ENCODE measurements at regions of chr14 and their contacts with region 1.

Region 1: GRCh38 chr14:103808403-103809001 is 38.9 kb downstream of the PPP1R13B start:
- DNase-seq: peak; percentile 66 to 82
- ATAC-seq: peak; percentile 76 to 89 (median 85)
- H3K4me3 ChIP-seq: no peak overlapping the region
- H3K27ac ChIP-seq: peak overlapping the region in 3 of 10 donors; percentile 5 to 42 (median 11)
- H3K4me1 ChIP-seq: peaks cover 6 to 72% (median 43%) of the 10 kb centered on the region in 9 donors
- H3K27me3 ChIP-seq: no peaks in the 10 kb centered on the region
- CTCF ChIP-seq: peak; percentile 71 to 93 (median 91)

Region 2: DNA sequence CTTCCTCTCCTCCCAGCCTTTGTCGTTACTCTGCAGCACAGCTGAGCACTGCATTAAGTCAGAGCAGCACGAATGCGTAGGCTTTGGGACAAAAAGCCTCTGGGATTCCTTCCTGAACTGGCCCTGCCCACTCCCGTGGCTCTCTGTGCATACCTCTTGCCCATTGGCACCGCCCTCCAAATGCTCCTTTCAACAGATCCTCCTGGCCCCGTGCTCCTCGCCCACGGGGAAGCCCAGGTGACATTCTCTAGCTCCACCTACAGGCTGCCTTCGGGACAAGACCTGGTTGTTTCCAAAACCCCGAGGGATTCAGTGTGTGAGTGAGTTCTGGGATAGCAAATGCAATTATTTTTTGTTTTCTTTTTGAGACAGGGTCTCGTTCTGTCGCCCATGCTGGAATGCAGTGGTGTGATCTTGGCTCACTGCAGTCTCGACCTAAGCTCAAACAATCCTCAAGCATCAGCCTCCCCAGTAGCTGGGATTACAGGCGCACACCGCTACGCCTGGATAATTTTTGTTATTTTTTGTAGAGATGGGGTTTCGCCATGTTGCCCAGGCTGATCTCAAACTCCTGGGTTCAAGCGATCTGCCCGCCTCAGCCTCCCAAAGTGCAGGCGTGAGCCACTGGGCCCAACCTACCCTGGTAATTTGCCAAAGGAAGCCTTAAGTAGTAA is 101.9 kb after region 1 on chr14:
- intact Hi-C with region 1: loop called (anchors 1 to 5 kb)
- DNase-seq: peak; percentile 71 to 82
- ATAC-seq: peak; percentile 83 to 97 (median 95)
- H3K4me3 ChIP-seq: peak overlapping the region in 4 of 10 donors; percentile 19 to 34 (median 23)
- H3K27ac ChIP-seq: peak overlapping the region in 6 of 10 donors; percentile 4 to 53 (median 38)
- H3K4me1 ChIP-seq: peaks cover 0 to 14% (median 12%) of the 10 kb centered on the region in 9 donors
- H3K27me3 ChIP-seq: no peaks in the 10 kb centered on the region
- CTCF ChIP-seq: peak; percentile 76 to 91 (median 81)

Region 3: DNA sequence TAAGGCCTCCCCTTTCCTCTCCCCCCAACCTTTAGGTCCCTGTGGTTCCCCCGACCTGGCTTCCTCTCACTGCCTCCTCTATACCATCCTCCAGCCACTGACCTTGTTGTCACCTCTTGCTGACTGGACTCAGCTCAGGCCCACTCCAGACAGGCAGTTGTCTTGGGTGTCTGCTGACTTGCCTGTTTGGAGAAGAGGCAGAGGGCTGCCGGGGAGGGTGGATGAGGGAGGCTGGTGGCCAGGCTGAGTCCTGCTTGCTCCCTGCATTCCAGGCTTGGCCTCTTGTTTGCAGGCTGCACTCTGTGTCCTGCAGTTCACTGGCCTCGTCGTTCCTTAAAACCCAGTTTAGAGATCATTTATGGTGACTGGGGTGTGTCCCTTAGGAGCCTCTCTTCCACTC is 164.9 kb after region 1 on chr14:
- intact Hi-C with region 1: loop called in 3 of 10 experiments (anchors 5 to 10 kb)
- DNase-seq: no peak
- ATAC-seq: peak in 5 of 8 donors; percentile 8 to 57 (median 33)
- H3K4me3 ChIP-seq: no peak overlapping the region
- H3K27ac ChIP-seq: no peak overlapping the region
- H3K4me1 ChIP-seq: no peaks in the 10 kb centered on the region
- H3K27me3 ChIP-seq: no peaks in the 10 kb centered on the region
- CTCF ChIP-seq: no peak

Region 4: DNA sequence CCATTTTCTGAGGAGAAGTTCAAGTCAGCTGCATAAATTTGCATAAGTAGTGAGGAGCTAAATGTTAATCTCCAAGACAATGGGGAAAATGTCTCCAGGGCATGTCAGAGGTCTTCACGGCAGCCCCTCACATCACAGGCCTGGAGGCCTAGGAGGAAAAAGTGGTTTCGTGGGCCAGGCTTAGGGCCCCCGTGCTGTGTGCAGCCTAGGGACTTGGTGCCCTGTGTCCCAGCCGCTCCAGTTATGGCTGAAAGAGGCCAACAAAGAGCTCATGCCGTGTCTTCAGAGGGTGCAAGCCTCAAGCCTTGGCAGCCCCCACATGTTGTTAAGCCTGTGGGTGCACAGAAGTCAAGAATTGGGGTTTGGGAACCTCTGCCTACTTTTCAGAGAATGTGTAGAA is 175.7 kb after region 1 on chr14:
- intact Hi-C with region 1: loop called in 7 of 10 experiments (anchors 1 to 10 kb)
- DNase-seq: no peak
- ATAC-seq: no peak
- H3K4me3 ChIP-seq: no peak overlapping the region
- H3K27ac ChIP-seq: no peak overlapping the region
- H3K4me1 ChIP-seq: peaks cover 0 to 3% (median 0%) of the 10 kb centered on the region in 9 donors
- H3K27me3 ChIP-seq: no peaks in the 10 kb centered on the region
- CTCF ChIP-seq: no peak

Region 5: GRCh38 chr14:103989964-103990363 is 181.5 kb after region 1 on chr14:
- intact Hi-C with region 1: loop called in 2 of 10 experiments (anchors 5 to 10 kb)
- DNase-seq: no peak
- ATAC-seq: no peak
- H3K4me3 ChIP-seq: no peak overlapping the region
- H3K27ac ChIP-seq: no peak overlapping the region
- H3K4me1 ChIP-seq: no peaks in the 10 kb centered on the region
- H3K27me3 ChIP-seq: peaks cover 0 to 4% (median 0%) of the 10 kb centered on the region in 7 donors
- CTCF ChIP-seq: no peak